CD4-positive, alpha-beta T cell (primary cell): ENCODE measurements at regions of chrX and their contacts with region 1.

Region 1: DNA sequence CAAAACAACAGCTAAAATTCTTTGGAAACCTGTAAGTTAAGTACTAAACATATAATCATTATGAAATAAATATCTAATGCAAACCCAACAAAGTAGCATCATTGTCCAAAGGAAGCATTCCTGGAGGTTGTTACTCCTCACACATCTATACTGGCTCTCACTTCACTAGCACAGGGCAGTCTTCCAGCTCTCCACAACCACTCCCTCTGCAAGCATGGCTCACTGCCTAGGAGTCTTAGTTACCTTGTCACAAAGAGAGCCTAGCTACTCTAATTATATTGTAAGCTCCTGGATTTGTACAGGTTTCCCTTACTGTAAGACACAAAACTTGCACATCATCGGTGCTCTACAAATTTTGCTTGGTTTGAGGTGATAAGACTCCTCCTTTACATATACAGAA is 76.1 kb downstream of the AMMECR1 start:
- DNase-seq: no peak
- ATAC-seq: no peak
- H3K4me3 ChIP-seq: no peak overlapping the region
- H3K4me3 Mint-ChIP-seq: no peak overlapping the region
- H3K27ac ChIP-seq: no peak overlapping the region
- H3K27ac Mint-ChIP-seq: peak overlapping the region; percentile 77
- H3K4me1 ChIP-seq: peaks cover 13% of the 10 kb centered on the region
- H3K4me1 Mint-ChIP-seq: peaks cover 70% of the 10 kb centered on the region
- H3K27me3 ChIP-seq: no peaks in the 10 kb centered on the region
- H3K27me3 Mint-ChIP-seq: no peaks in the 10 kb centered on the region
- CTCF ChIP-seq: no peak

Region 2: DNA sequence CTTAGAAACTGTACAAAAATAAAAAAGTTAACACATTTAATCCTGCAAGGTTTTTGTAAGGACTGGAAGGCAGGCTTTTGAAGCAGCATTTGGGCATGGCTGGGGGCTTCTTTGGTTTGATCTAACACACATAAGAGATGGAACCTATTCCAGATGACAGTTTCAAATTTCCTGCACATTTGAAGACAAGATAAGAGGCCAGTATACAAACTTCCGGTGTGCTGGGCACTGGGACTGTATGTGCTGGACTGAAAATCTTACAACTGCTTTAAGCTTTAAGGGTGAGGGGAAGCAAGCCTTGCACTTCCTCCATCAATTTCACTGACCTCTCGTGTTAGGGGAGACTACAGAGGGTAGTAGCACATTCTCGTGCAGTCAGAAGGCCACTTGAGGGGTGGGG is 46.8 kb before region 1 on chrX:
- CTCF ChIA-PET with region 1: no interaction called
- POLR2A ChIA-PET with region 1: interaction called, 3 read pairs
- intact Hi-C with region 1: loop called in 1 of 2 experiments (anchors 5 kb)
- DNase-seq: no peak
- ATAC-seq: no peak
- H3K4me3 ChIP-seq: no peak overlapping the region
- H3K4me3 Mint-ChIP-seq: no peak overlapping the region
- H3K27ac ChIP-seq: no peak overlapping the region
- H3K27ac Mint-ChIP-seq: no peak overlapping the region
- H3K4me1 ChIP-seq: no peaks in the 10 kb centered on the region
- H3K4me1 Mint-ChIP-seq: no peaks in the 10 kb centered on the region
- H3K27me3 ChIP-seq: no peaks in the 10 kb centered on the region
- H3K27me3 Mint-ChIP-seq: no peaks in the 10 kb centered on the region
- CTCF ChIP-seq: no peak

Region 3: DNA sequence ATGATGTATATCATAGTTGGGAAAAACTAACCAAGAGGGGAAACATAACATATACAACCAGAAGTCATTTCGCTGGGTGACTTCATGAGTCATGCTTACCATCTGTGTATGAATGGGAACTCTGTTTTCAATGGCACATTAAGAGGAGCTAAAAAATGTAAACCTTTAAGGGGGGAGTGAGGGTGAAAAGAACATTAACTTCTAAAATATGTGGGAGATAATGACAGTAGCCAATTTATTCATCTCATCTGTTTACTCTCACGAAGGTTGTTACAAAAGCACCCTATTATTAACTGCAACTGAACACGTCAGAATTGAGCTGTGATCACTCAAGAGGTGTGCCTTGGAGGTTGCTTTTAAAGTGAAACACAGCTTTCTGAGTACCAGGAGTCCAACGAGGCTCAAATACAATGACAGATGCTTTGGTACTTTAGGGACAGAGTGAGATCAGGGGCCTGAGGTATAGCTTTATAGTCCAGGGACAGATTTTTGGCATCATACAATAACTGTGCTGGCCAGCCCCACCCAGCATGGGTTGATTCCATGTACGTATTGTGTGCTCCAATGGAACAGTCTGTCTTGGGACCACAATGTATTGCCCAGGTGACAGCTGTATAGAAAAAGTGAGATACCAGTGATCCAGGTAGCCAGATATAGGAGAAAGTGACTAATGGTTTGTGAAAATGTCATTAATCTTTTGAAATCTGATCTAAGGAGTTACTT is 31.2 kb before region 1 on chrX:
- CTCF ChIA-PET with region 1: no interaction called
- POLR2A ChIA-PET with region 1: no interaction called
- intact Hi-C with region 1: loop called in 1 of 2 experiments (anchors 5 kb)
- DNase-seq: no peak
- ATAC-seq: no peak
- H3K4me3 ChIP-seq: no peak overlapping the region
- H3K4me3 Mint-ChIP-seq: no peak overlapping the region
- H3K27ac ChIP-seq: no peak overlapping the region
- H3K27ac Mint-ChIP-seq: no peak overlapping the region
- H3K4me1 ChIP-seq: no peaks in the 10 kb centered on the region
- H3K4me1 Mint-ChIP-seq: peaks cover 13% of the 10 kb centered on the region
- H3K27me3 ChIP-seq: no peaks in the 10 kb centered on the region
- H3K27me3 Mint-ChIP-seq: no peaks in the 10 kb centered on the region
- CTCF ChIP-seq: no peak

Region 4: DNA sequence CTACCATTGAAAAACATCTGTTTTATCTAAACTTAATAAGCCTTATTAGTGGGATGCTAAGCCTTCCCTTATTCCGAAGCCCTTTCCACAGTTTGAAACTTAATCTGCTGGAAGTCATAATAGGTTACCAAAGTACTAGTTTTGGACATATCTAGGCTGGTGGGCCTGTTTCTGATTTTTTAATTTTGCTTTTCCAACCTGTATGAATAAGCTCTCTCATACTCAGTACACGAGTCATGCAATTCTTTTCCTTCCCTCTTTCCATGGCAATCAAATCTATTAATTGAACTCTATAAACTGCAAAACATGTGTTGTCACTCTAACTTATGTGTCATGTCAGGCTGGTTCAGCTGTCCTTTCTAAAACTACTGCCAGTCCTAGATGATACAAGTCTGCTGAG is 14.9 kb before region 1 on chrX:
- CTCF ChIA-PET with region 1: interaction called, 5 read pairs
- POLR2A ChIA-PET with region 1: interaction called, 18 read pairs
- intact Hi-C with region 1: no loop called
- DNase-seq: no peak
- ATAC-seq: no peak
- H3K4me3 ChIP-seq: no peak overlapping the region
- H3K4me3 Mint-ChIP-seq: no peak overlapping the region
- H3K27ac ChIP-seq: no peak overlapping the region
- H3K27ac Mint-ChIP-seq: peak overlapping the region; percentile 93
- H3K4me1 ChIP-seq: peaks cover 14% of the 10 kb centered on the region
- H3K4me1 Mint-ChIP-seq: peaks cover 55% of the 10 kb centered on the region
- H3K27me3 ChIP-seq: no peaks in the 10 kb centered on the region
- H3K27me3 Mint-ChIP-seq: no peaks in the 10 kb centered on the region
- CTCF ChIP-seq: no peak

Region 5: DNA sequence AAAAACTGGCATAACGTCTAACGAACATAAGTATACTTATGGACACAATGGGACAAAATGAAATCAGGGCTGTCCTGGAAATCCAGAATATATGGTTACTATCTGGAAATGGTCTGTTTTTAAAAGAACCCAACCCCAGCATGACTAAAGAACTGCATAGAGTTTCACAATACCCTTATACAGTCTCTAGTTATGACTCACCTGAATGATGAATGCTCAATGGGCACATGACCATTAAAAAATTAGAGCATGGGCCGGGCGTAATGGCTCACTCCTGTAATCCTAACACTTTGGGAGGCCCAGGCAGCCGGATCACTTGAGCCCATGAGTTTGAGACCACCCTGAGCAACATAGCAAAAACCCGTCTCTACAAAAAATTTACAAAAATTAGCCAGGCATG is 44.3 kb after region 1 on chrX:
- CTCF ChIA-PET with region 1: no interaction called
- POLR2A ChIA-PET with region 1: no interaction called
- intact Hi-C with region 1: no loop called
- DNase-seq: no peak
- ATAC-seq: no peak
- H3K4me3 ChIP-seq: no peak overlapping the region
- H3K4me3 Mint-ChIP-seq: no peak overlapping the region
- H3K27ac ChIP-seq: no peak overlapping the region
- H3K27ac Mint-ChIP-seq: no peak overlapping the region
- H3K4me1 ChIP-seq: no peaks in the 10 kb centered on the region
- H3K4me1 Mint-ChIP-seq: peaks cover 50% of the 10 kb centered on the region
- H3K27me3 ChIP-seq: no peaks in the 10 kb centered on the region
- H3K27me3 Mint-ChIP-seq: no peaks in the 10 kb centered on the region
- CTCF ChIP-seq: no peak

Region 6: DNA sequence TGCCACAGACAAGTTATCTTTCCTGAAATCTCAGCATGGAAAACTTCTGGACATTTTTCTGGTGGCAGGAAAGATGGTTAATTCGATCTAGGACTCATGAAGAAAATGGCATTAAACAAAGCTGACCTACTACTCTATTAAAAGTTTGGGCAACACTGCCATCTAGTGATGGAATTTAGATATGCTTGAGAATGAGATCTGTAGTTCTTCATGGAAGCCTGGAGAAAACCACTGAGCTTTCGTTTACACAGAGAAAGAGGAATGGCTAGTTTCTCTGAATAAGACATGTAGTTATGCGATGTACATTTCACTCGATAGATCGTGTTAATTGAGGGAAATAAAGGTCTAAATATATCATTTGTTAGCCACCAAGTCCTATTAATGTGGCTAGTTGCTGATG is 605.5 kb after region 1 on chrX:
- CTCF ChIA-PET with region 1: no interaction called
- POLR2A ChIA-PET with region 1: no interaction called
- intact Hi-C with region 1: no loop called
- DNase-seq: peak in 3 of 14 experiments; percentile 44 to 61 (median 52)
- ATAC-seq: no peak
- H3K4me3 ChIP-seq: no peak overlapping the region
- H3K4me3 Mint-ChIP-seq: no peak overlapping the region
- H3K27ac ChIP-seq: no peak overlapping the region
- H3K27ac Mint-ChIP-seq: no peak overlapping the region
- H3K4me1 ChIP-seq: no peaks in the 10 kb centered on the region
- H3K4me1 Mint-ChIP-seq: no peaks in the 10 kb centered on the region
- H3K27me3 ChIP-seq: no peaks in the 10 kb centered on the region
- H3K27me3 Mint-ChIP-seq: no peaks in the 10 kb centered on the region
- CTCF ChIP-seq: peak; percentile 60